Endothelial cell of umbilical vein (primary cell): ENCODE measurements at regions of chr10 and their contacts with region 1.

Region 1: DNA sequence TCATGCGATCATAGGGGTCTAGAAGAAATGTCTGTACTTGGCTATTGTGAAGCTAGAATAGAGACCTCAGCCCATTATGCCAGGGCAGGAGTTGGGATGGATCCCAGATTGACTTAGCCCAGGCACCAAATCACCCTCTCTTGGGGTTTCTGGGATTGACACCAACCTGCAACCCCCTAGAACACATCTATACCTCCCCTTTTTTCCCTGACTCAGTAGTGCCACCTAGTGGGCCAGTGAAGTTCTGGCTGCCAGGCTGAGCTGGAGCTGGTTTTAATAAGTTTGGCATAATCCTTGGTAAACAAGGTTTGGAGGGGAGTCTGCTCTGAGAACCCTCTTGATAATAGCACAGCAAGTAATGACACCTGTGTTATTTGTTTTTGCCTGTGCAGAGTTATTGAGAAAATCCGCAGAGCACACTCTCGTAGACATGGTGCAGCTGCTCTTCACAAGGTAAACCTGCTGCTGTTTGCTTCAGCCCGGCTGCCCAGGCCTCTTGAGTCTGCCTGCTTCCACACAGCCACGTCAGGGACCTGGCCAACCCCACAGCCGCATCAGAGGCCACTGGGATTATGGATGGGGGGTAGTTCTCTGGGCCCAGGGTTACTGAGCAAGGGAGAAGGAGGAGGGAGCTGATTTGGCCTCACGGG is 43.3 kb upstream of the NFKB2 start:
- DNase-seq: peak; percentile 58
- H3K4me3 ChIP-seq: no peak overlapping the region
- H3K27ac ChIP-seq: no peak overlapping the region
- H3K4me1 ChIP-seq: no peaks in the 10 kb centered on the region
- H3K27me3 ChIP-seq: no peaks in the 10 kb centered on the region
- CTCF ChIP-seq: peak; percentile 87 to 96
- POLR2A ChIP-seq: no peak

Region 2: DNA sequence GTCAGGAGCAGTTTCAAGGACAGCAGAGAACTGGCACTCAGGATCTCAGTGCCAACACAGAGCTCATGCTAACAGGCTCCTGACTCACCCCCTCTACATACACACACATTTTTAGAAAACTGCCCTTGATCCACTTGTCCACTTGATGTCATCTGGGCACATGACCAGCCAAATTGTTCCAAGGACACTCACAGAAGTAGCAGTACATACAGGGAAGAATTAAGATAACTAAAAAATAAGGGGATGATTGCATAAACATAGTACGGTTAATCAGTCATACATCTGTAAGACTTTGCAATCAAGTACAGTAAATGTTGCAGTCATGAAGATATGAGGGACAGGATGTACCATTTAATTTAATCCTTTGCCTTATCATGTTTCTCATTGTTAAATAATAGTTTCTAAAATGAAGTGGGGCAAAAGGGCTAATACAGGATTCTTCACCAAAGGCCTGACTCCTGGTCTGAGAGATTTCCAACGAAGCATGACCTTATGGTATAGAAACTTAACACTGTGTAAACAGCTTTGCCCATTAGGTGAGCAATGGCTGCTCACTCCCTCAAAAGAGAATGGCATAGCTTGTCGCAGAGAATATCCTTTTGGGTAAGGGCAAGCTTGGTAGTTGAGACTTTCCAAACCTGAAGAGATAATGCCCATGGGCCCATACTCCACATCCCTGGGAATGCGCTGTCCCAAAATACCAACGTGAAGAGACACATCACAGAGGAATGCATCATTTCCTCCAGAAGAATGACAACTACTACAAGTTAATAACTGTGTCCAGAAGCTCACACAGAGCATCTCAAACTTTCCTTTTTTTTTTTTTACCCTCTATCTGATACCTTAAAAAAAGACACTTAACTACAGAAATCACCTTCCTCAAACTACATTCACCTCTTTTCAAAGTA is 390.3 kb before region 1 on chr10:
- CTCF ChIA-PET with region 1: no interaction called
- POLR2A ChIA-PET with region 1: no interaction called
- dilution Hi-C with region 1: no loop called
- intact Hi-C with region 1: no loop called
- DNase-seq: no peak
- H3K4me3 ChIP-seq: no peak overlapping the region
- H3K27ac ChIP-seq: no peak overlapping the region
- H3K4me1 ChIP-seq: peaks cover 7% of the 10 kb centered on the region
- H3K27me3 ChIP-seq: no peaks in the 10 kb centered on the region
- CTCF ChIP-seq: no peak
- POLR2A ChIP-seq: no peak

Region 3: DNA sequence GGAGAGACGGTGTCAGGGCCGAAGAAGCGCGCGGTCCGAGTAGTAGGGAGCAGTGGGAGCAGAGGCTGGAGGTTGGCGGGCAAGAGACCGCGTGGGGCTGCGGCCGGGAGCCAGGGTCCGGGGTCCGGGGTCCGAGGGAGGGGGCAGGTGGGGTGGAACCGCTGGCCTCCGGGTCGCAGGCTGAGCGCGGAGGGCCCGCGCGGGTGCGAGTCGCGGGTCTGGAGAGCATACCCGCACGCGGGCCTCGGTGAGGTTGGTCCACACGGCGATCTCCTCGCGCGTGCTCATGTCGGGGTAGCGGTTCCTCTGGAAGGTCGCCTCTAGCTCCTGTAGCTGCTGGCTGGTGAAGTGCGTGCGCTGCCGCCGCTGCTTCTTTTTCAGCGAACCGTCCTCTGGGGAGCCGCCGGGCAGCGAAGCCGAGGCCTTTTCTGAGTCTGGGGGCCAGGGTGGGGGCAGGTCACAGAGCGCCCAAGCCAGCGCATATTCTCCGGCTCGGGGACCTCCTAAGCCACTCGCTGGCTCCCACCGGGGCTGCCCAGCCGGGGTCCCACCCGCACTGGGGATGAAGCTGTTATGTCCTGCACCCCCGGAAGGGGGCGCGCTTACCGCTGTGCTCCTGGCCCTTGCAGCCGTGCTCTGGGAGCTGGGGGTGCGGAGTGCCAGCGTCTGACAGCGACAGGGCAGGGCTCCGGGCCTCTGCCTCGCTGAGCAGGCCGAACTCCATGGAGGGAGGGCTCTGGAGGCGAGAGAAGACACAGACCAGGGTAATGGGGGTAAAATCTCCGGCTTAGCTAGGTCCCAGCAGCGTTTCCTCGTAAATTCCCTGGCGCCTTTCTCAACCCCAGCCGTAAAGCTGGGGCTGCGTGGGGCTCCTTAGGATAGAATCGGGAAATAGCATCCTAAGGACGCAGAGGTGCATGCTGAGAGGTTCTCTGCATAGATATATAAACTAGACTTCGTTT is 120.6 kb before region 1 on chr10:
- CTCF ChIA-PET with region 1: interaction called, 1,402 read pairs
- POLR2A ChIA-PET with region 1: interaction called, 4 read pairs
- dilution Hi-C with region 1: loop called (anchors 25 kb)
- intact Hi-C with region 1: loop called (anchors 1 kb)
- DNase-seq: peak; percentile 19
- H3K4me3 ChIP-seq: no peak overlapping the region
- H3K27ac ChIP-seq: no peak overlapping the region
- H3K4me1 ChIP-seq: peaks cover 2% of the 10 kb centered on the region
- H3K27me3 ChIP-seq: peaks cover 52 to 59% of the 10 kb centered on the region in 2 experiments
- CTCF ChIP-seq: peak; percentile 88 to 93
- POLR2A ChIP-seq: no peak

Region 4: GRCh38 chr10:102254426-102254825 is 97.8 kb before region 1 on chr10:
- CTCF ChIA-PET with region 1: interaction called, 16 read pairs
- POLR2A ChIA-PET with region 1: no interaction called
- dilution Hi-C with region 1: loop called (anchors 25 kb)
- intact Hi-C with region 1: no loop called
- DNase-seq: no peak
- H3K4me3 ChIP-seq: no peak overlapping the region
- H3K27ac ChIP-seq: no peak overlapping the region
- H3K4me1 ChIP-seq: no peaks in the 10 kb centered on the region
- H3K27me3 ChIP-seq: no peaks in the 10 kb centered on the region
- CTCF ChIP-seq: no peak
- POLR2A ChIP-seq: no peak

Region 5: GRCh38 chr10:102274062-102274461 is 78.1 kb before region 1 on chr10:
- CTCF ChIA-PET with region 1: interaction called, 22 read pairs
- POLR2A ChIA-PET with region 1: no interaction called
- dilution Hi-C with region 1: no loop called
- intact Hi-C with region 1: no loop called
- DNase-seq: no peak
- H3K4me3 ChIP-seq: no peak overlapping the region
- H3K27ac ChIP-seq: no peak overlapping the region
- H3K4me1 ChIP-seq: no peaks in the 10 kb centered on the region
- H3K27me3 ChIP-seq: no peaks in the 10 kb centered on the region
- CTCF ChIP-seq: no peak
- POLR2A ChIP-seq: no peak

Region 6: DNA sequence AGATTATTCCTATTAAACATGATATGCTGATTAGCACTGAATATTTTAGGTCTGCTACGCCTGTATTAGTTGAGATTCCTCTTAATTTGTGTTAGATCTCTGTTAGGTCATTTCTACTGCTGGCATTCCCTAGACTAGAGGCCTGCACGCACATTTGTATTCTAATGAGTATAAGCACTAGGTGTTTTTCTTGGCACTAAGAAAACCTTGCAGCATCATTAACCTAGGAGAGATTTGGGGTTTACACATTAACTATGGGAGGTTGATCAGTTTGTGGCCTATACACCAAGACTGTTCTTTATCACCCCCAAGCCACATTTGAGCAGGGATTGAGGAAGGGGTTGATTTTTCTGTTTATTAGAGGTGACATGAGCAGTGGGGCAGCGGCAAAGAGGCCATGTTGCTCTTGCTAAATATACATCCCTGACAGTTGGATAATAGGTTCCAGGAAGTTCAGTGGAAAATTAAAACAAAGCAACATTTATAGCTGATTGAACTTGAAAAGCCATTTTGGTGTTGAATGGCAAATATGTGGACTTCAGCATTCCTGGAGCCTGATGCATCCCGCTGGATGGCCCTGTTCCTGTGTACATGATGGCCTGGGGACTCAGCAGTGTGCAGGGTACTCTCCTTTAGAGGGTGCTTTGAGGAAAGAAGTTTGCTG is 41.7 kb before region 1 on chr10:
- CTCF ChIA-PET with region 1: interaction called, 18 read pairs
- POLR2A ChIA-PET with region 1: no interaction called
- dilution Hi-C with region 1: no loop called
- intact Hi-C with region 1: no loop called
- DNase-seq: peak; percentile 49
- H3K4me3 ChIP-seq: no peak overlapping the region
- H3K27ac ChIP-seq: peak overlapping the region; percentile 41
- H3K4me1 ChIP-seq: peaks cover 16% of the 10 kb centered on the region
- H3K27me3 ChIP-seq: no peaks in the 10 kb centered on the region
- CTCF ChIP-seq: no peak
- POLR2A ChIP-seq: no peak

Region 7: DNA sequence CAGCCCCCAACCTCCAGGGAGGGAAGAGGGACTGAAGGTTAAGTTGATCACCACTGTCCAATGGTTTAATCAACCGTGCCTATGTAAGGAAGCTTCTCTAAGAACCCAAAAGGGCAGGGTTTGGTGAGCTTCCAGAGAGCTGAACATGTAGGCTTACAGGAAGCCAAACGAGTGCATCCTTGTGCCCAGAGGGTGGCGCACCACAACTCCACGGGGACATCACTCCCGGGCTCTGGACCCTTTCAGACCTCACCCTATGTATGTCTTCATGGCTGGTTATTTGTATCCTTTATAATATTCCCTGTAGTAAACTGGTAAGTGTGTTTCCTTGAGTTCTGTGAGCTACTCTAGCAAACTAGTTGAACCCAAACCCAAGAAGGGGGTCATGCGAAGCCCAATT is 31.9 kb after region 1 on chr10:
- CTCF ChIA-PET with region 1: interaction called, 10 read pairs
- POLR2A ChIA-PET with region 1: no interaction called
- dilution Hi-C with region 1: no loop called
- intact Hi-C with region 1: no loop called
- DNase-seq: no peak
- H3K4me3 ChIP-seq: no peak overlapping the region
- H3K27ac ChIP-seq: no peak overlapping the region
- H3K4me1 ChIP-seq: no peaks in the 10 kb centered on the region
- H3K27me3 ChIP-seq: no peaks in the 10 kb centered on the region
- CTCF ChIP-seq: peak in 1 of 2 donors; percentile 7
- POLR2A ChIP-seq: no peak